ENCODE measurements at regions of chr20 and their contacts with region 1.

Region 1: DNA sequence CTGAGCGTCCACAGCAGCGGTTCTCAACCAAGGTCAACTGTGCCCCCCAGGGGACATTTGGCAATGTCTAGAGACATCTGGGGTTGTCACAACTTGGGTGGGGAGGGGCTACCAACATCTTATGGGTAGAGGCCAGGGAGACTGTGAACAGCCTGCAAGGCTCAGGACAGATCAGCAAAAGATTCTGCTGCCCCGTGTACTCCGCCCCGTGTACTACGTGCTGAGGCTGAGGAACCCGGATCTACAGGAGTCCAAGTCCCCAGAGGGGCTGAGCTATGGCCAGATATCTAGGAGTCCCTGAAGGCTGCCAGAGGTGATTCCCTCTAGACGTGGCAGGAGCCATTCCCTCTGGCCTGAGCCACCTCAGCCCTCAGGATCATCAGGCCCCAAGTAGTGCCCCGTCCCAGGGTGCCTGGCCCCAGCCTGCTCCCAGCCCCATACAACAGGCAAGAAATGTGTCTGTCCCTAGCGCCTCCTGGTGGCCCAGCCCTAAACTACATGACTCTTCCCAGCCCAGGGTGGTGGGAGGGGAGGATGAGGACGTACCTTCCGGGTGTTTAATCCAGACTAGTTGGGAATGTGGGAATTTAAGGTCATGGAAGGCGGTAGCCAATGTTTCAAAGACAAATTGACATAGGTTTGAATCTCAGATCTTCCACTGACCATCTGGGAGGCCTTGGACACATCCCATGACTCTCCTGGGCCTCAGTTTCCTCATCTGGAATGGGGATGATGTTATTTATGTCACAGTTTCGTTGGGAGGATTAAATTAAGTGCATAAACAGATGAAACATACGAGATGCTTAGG is 49.5 kb upstream of the PTPN1 start:
- DNase-seq: peak; percentile 96
- H3K4me3 Mint-ChIP-seq: no peak overlapping the region
- H3K27ac Mint-ChIP-seq: peak overlapping the region; percentile 60
- H3K4me1 Mint-ChIP-seq: peaks cover 13% of the 10 kb centered on the region
- H3K27me3 Mint-ChIP-seq: no peaks in the 10 kb centered on the region
- CTCF ChIP-seq: peak; percentile 99

Region 2: DNA sequence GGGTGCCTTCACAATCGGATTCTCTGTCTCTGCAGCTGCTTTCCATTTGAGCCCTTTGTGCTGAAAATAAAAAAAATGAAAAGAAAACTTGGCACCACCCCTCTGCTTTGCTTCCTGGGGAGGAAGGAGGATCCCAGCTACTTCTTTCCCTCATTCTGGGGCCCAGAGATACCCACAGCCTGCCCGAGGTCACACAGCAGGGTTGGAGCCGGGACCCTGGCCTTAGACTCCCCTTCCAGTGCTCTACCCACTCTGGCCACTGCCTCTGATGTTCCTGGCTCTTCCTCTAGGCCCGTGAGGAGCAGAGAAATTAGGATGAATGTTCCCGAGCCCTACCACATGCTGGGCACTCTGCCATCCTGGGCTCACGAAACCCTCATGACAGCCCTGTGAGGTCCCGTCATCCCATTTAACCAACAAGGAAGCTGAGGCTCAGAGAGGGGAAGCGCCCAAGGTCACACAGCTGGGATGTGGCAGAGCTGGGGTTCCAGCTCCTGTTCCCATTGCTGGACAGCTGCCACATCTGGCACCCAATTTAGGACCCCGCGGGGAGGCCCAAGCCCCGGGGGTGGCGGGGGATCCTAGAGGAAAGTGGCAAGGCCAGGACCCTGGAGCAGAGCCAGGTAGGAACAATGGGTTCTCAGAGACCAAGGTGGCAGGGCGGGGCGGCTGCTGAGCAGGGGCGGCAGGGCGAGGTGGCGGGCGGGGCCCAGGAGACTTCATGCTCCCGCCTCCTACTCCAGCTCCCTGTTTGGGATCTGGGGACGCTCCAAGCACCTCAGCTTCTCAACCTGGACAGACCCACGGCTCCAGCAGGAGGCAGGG is 193.4 kb before region 1 on chr20:
- CTCF ChIA-PET with region 1: interaction called, 5 read pairs
- intact Hi-C with region 1: loop called (anchors 5 kb)
- DNase-seq: peak; percentile 99
- H3K4me3 Mint-ChIP-seq: peak overlapping the region; percentile 17
- H3K27ac Mint-ChIP-seq: peak overlapping the region; percentile 85
- H3K4me1 Mint-ChIP-seq: peaks cover 51% of the 10 kb centered on the region
- H3K27me3 Mint-ChIP-seq: no peaks in the 10 kb centered on the region
- CTCF ChIP-seq: no peak

Region 3: DNA sequence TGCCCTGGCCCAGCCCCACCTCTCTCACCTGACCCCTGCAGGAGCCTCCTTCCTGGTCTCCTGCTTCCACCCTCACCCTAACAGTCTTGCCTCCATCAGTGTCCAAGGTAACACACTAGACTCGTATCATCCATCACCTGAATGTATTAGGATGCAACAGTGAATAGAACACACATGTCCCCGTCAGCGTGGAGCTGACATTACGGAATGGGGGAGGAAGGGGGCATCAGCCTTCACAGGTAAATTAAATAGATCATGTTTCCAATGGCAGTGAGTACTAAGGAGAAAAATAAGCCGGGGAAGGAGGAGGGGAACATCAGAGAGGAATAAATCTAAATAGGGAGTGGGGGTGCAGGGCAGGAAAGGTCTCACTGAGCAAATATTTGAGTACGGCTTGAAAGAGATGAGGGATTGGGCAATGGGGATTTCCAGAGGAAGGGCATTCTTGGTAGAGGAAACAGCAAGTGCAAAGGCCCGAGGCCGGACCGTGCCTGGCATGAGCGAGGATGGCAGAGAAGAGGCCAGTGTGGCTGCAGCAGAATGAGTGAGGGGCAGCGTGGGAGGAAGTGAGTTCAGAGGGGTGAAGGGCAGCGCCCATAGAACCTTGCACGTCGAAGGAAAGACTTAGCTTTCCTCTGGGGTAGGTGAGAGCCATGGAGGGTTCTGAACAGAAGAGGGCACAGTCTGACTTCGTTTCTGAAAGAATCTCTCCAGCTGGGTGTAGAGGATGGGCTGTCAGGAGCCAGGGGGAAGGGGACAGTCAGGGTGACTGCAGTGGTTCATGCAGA is 60.6 kb before region 1 on chr20:
- CTCF ChIA-PET with region 1: interaction called, 5 read pairs
- intact Hi-C with region 1: loop called (anchors 5 kb)
- DNase-seq: peak; percentile 61
- H3K4me3 Mint-ChIP-seq: no peak overlapping the region
- H3K27ac Mint-ChIP-seq: peak overlapping the region; percentile 1
- H3K4me1 Mint-ChIP-seq: peaks cover 40% of the 10 kb centered on the region
- H3K27me3 Mint-ChIP-seq: peaks cover 17% of the 10 kb centered on the region
- CTCF ChIP-seq: peak; percentile 36

Region 4: DNA sequence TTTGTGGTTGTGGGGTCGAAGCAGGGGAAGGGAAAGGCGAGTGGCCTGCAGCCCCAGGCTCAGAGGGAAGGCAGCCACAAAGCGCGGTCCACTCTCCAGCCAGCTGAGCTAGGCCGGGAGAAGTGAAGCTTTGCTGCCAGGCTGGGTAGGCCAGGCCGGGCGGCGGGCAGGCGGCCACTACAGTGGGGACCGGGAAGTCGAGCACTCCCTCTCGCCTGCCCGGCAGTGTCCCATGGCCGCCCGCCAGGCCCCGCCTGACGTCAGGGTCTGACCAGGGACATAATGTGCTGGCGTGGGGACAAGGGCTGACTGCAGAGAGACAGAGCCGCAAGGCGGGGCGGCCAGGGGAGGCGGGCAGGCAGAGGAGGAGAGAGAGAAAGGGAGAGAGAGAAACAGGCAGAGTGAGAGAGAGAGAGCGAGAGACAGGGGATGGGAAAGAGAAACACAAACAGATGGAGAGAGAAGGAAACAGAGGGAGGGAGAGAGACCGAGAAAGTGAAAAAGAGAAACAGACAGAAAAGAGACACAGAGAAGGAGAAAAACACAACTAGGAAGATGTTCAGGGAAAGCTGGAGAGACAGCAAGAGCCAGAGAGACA is 45.0 kb before region 1 on chr20:
- CTCF ChIA-PET with region 1: no interaction called
- intact Hi-C with region 1: loop called (anchors 1 kb)
- DNase-seq: peak; percentile 99
- H3K4me3 Mint-ChIP-seq: peak overlapping the region; percentile 29
- H3K27ac Mint-ChIP-seq: peak overlapping the region; percentile 93
- H3K4me1 Mint-ChIP-seq: peaks cover 55% of the 10 kb centered on the region
- H3K27me3 Mint-ChIP-seq: no peaks in the 10 kb centered on the region
- CTCF ChIP-seq: no peak

Region 5: DNA sequence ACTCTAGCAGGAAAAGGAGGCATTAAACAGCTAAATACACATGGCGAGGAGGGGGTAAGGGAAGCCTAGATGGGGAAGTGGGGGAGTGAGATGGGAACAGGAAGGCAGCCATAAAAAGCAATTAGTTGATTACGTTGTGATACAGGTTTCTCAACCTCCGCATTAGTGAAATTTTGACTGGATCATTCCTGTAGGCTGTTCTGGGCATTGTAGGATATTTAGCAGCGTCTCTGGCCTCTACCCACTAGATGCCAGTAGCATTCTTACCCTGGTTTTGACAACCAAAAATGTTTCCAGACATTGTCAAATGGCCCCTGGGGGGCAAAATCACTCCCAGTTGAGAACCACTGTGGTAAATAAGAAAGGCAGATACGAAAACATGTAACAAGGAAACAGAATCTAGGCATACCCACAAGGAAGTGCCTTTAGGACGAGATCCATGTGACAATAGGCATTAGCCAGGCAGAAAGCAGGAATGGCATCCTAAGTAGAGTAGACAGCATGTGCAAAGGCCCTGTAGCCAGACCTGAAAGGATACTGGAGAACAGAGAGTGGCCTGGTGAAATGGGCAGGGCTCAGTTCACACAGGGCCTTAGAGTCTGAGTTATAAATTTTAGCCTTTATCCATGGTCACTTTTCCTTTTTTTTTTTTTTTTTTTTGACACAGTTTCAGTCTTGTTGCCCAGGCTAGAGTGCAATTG is 23.8 kb after region 1 on chr20:
- CTCF ChIA-PET with region 1: no interaction called
- intact Hi-C with region 1: no loop called
- DNase-seq: no peak
- H3K4me3 Mint-ChIP-seq: peak overlapping the region; percentile 65
- H3K27ac Mint-ChIP-seq: peak overlapping the region; percentile 58
- H3K4me1 Mint-ChIP-seq: peaks cover 14% of the 10 kb centered on the region
- H3K27me3 Mint-ChIP-seq: no peaks in the 10 kb centered on the region
- CTCF ChIP-seq: no peak

Measured in Calu3 (cell line).